ENCODE measurements at regions of chr7 and their contacts with region 1.

Region 1: GRCh38 chr7:150955519-150956394 is 22.4 kb downstream of the KCNH2 start:
- DNase-seq: peak; percentile 99 to 100 (median 99)
- ATAC-seq: peak; percentile 80
- H3K4me3 ChIP-seq: peak overlapping the region; percentile 91
- H3K27ac ChIP-seq: peak overlapping the region; percentile 86
- H3K4me1 ChIP-seq: peaks cover 60 to 94% of the 10 kb centered on the region in 2 experiments
- H3K27me3 ChIP-seq: no peaks in the 10 kb centered on the region
- CTCF ChIP-seq: peak in 1 of 3 experiments; percentile 0; a peak in 1 of 6 replicates
- EP300 ChIP-seq: peak; percentile 87
- POLR2A ChIP-seq: peak; percentile 86
- RAD21 ChIP-seq: peak in 1 of 2 experiments; percentile 11; a peak in 3 of 4 replicates

Region 2: GRCh38 chr7:150568714-150569113 is 387.0 kb before region 1 on chr7:
- CTCF ChIA-PET with region 1: no interaction called
- POLR2A ChIA-PET with region 1: no interaction called
- in situ Hi-C with region 1: no loop called
- intact Hi-C with region 1: no loop called
- DNase-seq: no peak
- ATAC-seq: no peak
- H3K4me3 ChIP-seq: no peak overlapping the region
- H3K27ac ChIP-seq: no peak overlapping the region
- H3K4me1 ChIP-seq: no peaks in the 10 kb centered on the region
- H3K27me3 ChIP-seq: peaks cover 0 to 24% of the 10 kb centered on the region in 2 experiments; a peak in 3 of 5 replicates
- CTCF ChIP-seq: no peak
- EP300 ChIP-seq: no peak
- POLR2A ChIP-seq: no peak
- RAD21 ChIP-seq: no peak

Region 3: GRCh38 chr7:150927956-150928344 is 27.8 kb before region 1 on chr7:
- CTCF ChIA-PET with region 1: no interaction called
- POLR2A ChIA-PET with region 1: interaction called, 4 read pairs
- in situ Hi-C with region 1: no loop called
- intact Hi-C with region 1: loop called (anchors 2 kb)
- DNase-seq: peak; percentile 77 to 83 (median 80)
- ATAC-seq: peak; percentile 91
- H3K4me3 ChIP-seq: no peak overlapping the region
- H3K27ac ChIP-seq: no peak overlapping the region
- H3K4me1 ChIP-seq: peaks cover 12 to 36% of the 10 kb centered on the region in 2 experiments
- H3K27me3 ChIP-seq: no peaks in the 10 kb centered on the region
- CTCF ChIP-seq: peak; percentile 36 to 58 (median 52); a peak in 4 of 6 replicates
- EP300 ChIP-seq: no peak
- POLR2A ChIP-seq: no peak
- RAD21 ChIP-seq: peak in 1 of 2 experiments; percentile 49; a peak in 3 of 4 replicates

Region 4: GRCh38 chr7:150941981-150942590 is 13.7 kb before region 1 on chr7:
- CTCF ChIA-PET with region 1: no interaction called
- POLR2A ChIA-PET with region 1: interaction called, 19 read pairs
- in situ Hi-C with region 1: no loop called
- intact Hi-C with region 1: no loop called
- DNase-seq: peak in 2 of 4 experiments; percentile 63 to 68
- ATAC-seq: peak; percentile 18
- H3K4me3 ChIP-seq: no peak overlapping the region
- H3K27ac ChIP-seq: no peak overlapping the region
- H3K4me1 ChIP-seq: peaks cover 15 to 64% of the 10 kb centered on the region in 2 experiments; a peak in 4 of 5 replicates
- H3K27me3 ChIP-seq: no peaks in the 10 kb centered on the region
- CTCF ChIP-seq: no peak
- EP300 ChIP-seq: no peak
- POLR2A ChIP-seq: no peak
- RAD21 ChIP-seq: no peak

Region 5: GRCh38 chr7:150971242-150972022 is 15.7 kb after region 1 on chr7:
- CTCF ChIA-PET with region 1: no interaction called
- POLR2A ChIA-PET with region 1: interaction called, 15 read pairs
- in situ Hi-C with region 1: no loop called
- intact Hi-C with region 1: no loop called
- DNase-seq: peak; percentile 79 to 88 (median 82)
- ATAC-seq: 0 out of 3 replicates have a peak, but pooled peaks have one; percentile 1
- H3K4me3 ChIP-seq: no peak overlapping the region
- H3K27ac ChIP-seq: no peak overlapping the region
- H3K4me1 ChIP-seq: peaks cover 47 to 71% of the 10 kb centered on the region in 2 experiments
- H3K27me3 ChIP-seq: no peaks in the 10 kb centered on the region
- CTCF ChIP-seq: no peak
- EP300 ChIP-seq: no peak
- POLR2A ChIP-seq: no peak
- RAD21 ChIP-seq: no peak

Region 6: GRCh38 chr7:151408839-151409666 is 453.3 kb after region 1 on chr7:
- CTCF ChIA-PET with region 1: no interaction called
- POLR2A ChIA-PET with region 1: no interaction called
- in situ Hi-C with region 1: no loop called
- intact Hi-C with region 1: no loop called
- DNase-seq: no peak
- ATAC-seq: no peak
- H3K4me3 ChIP-seq: no peak overlapping the region
- H3K27ac ChIP-seq: no peak overlapping the region
- H3K4me1 ChIP-seq: peaks cover 25 to 46% of the 10 kb centered on the region in 2 experiments
- H3K27me3 ChIP-seq: peaks cover 2 to 6% of the 10 kb centered on the region in 2 experiments; a peak in 1 of 5 replicates
- CTCF ChIP-seq: no peak
- EP300 ChIP-seq: no peak
- POLR2A ChIP-seq: no peak
- RAD21 ChIP-seq: no peak